Breast epithelium (tissue), 4 donors: ENCODE measurements at regions of chr1 and their contacts with region 1.

Region 1: GRCh38 chr1:9711466-9712020 is 60.0 kb downstream of the PIK3CD start:
- DNase-seq: no peak
- H3K4me3 ChIP-seq: no peak overlapping the region
- H3K27ac ChIP-seq: no peak overlapping the region
- H3K4me1 ChIP-seq: no peaks in the 10 kb centered on the region
- H3K27me3 ChIP-seq: no peaks in the 10 kb centered on the region
- CTCF ChIP-seq: no peak
- POLR2A ChIP-seq: no peak

Region 2: GRCh38 chr1:9726905-9727595 is 15.5 kb after region 1 on chr1:
- intact Hi-C with region 1: loop called (anchors 1 kb)
- DNase-seq: no peak
- H3K4me3 ChIP-seq: no peak overlapping the region
- H3K27ac ChIP-seq: no peak overlapping the region
- H3K4me1 ChIP-seq: no peaks in the 10 kb centered on the region
- H3K27me3 ChIP-seq: no peaks in the 10 kb centered on the region
- CTCF ChIP-seq: no peak
- POLR2A ChIP-seq: no peak

Region 3: DNA sequence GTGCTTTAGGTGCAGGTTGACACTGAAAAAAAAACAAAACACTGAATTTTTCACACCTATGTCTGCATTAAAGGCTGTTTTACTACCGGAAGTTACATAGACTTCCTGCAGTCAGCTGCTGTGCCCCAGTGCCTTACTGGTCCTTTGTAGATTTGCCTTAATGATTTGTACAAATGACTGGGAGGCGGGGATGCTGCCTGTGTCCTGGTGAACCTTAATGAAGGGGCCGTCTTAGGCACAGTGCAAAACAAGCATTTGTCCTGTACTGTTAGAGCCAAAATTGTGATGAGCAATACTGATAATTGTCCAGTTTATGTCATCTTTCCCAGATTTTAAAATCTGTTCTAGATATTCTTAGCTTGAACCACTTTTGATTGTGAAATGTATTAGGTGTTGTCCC is 596.5 kb after region 1 on chr1:
- intact Hi-C with region 1: no loop called
- DNase-seq: no peak
- H3K4me3 ChIP-seq: no peak overlapping the region
- H3K27ac ChIP-seq: peak overlapping the region; percentile 8 to 29
- H3K4me1 ChIP-seq: no peaks in the 10 kb centered on the region
- H3K27me3 ChIP-seq: no peaks in the 10 kb centered on the region
- CTCF ChIP-seq: no peak
- POLR2A ChIP-seq: no peak